ENCODE measurements at regions of chr6 and their contacts with region 1.

Region 1: GRCh38 chr6:158295976-158296471 is 16.2 kb upstream of the TULP4 start:
- DNase-seq: peak in 1 of 2 experiments; percentile 76
- H3K4me3 ChIP-seq: no peak overlapping the region
- H3K4me3 Mint-ChIP-seq: peak overlapping the region; percentile 50
- H3K27ac Mint-ChIP-seq: peak overlapping the region; percentile 88
- H3K4me1 ChIP-seq: peaks cover 30% of the 10 kb centered on the region
- H3K4me1 Mint-ChIP-seq: peaks cover 21% of the 10 kb centered on the region
- H3K27me3 ChIP-seq: no peaks in the 10 kb centered on the region
- H3K27me3 Mint-ChIP-seq: no peaks in the 10 kb centered on the region
- CTCF ChIP-seq: no peak

Region 2: GRCh38 chr6:158232316-158233213 is 63.5 kb before region 1 on chr6:
- CTCF ChIA-PET with region 1: no interaction called
- POLR2A ChIA-PET with region 1: no interaction called
- intact Hi-C with region 1: loop called (anchors 1 kb)
- DNase-seq: peak; percentile 58 to 66
- H3K4me3 ChIP-seq: peak overlapping the region; percentile 88
- H3K4me3 Mint-ChIP-seq: peak overlapping the region; percentile 94
- H3K27ac Mint-ChIP-seq: peak overlapping the region; percentile 94
- H3K4me1 ChIP-seq: peaks cover 7% of the 10 kb centered on the region; the same call in 1 of the 2 replicates
- H3K4me1 Mint-ChIP-seq: peaks cover 17% of the 10 kb centered on the region
- H3K27me3 ChIP-seq: no peaks in the 10 kb centered on the region
- H3K27me3 Mint-ChIP-seq: no peaks in the 10 kb centered on the region
- CTCF ChIP-seq: no peak

Region 3: DNA sequence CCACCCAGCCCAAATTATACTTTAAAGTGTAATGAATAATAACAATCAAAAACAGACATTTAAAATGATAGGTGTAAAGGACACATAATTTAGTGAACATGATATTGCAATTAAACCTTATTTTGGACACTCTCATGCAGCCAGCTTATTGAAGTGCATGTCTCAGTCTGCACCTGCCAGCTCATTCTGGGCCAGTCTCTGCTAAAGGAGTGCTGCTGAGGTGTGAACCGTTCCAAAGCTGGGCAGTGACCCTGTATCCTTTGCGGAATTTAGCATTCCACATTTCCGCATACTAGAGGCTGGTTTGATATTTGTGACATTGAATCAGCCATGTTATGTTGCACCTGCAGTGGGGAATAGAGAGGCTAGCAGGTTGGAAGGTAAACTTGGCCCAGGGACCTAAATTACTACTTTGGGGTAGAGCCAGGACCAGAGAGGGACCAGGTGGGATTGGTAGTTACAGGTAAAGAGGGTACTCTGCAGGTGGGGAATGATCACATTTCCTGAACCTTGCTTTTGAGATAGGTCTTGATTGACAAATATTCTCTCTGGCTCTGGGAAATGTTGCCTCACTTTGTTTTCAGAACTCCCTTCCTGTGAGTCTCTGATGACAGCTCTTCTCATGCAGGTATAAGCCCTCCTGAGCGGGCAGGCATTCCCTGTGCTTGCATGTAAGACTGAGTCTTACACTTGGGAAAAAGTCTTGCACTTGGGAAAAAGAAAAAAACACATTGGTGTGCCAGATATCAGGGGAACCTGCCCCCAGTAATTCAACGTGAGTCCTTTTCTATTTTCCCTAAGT is 42.5 kb after region 1 on chr6:
- CTCF ChIA-PET with region 1: no interaction called
- POLR2A ChIA-PET with region 1: no interaction called
- intact Hi-C with region 1: loop called (anchors 1 kb)
- DNase-seq: no peak
- H3K4me3 ChIP-seq: no peak overlapping the region
- H3K4me3 Mint-ChIP-seq: peak overlapping the region; percentile 2
- H3K27ac Mint-ChIP-seq: peak overlapping the region; percentile 72
- H3K4me1 ChIP-seq: peaks cover 27% of the 10 kb centered on the region
- H3K4me1 Mint-ChIP-seq: peaks cover 30% of the 10 kb centered on the region
- H3K27me3 ChIP-seq: no peaks in the 10 kb centered on the region
- H3K27me3 Mint-ChIP-seq: no peaks in the 10 kb centered on the region
- CTCF ChIP-seq: no peak

Region 4: DNA sequence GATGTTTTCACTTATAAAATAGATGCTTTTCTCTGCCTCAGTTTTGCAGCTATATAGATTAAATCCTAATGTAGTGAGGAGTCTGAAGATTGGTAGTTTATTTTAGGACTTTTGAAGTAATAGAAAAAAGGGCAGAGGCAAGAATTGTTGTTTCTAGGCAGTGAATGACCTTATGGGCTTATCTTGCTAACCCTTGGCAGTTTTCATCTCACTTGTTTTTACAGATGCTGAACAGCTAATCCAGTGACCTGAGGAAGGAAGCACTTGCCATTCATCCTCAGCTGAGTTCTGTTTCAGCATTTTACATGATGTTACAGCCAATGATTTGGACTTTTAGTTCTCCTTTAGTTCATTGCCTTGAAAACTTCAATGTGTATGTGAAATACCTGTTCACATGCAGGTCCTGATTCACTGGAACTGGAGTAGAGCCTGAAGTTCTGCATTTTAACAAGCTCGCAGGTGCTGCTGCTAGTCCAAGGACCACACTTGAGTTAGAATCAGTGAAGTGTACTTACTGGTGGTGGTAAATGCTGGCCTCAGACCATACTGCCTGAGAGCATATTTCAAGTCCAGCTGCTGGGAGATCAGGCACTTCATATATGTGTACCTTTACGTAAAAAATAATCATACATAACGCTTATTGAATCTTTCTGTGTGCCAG is 103.1 kb after region 1 on chr6:
- CTCF ChIA-PET with region 1: no interaction called
- POLR2A ChIA-PET with region 1: no interaction called
- intact Hi-C with region 1: loop called (anchors 5 kb)
- DNase-seq: no peak
- H3K4me3 ChIP-seq: no peak overlapping the region
- H3K4me3 Mint-ChIP-seq: no peak overlapping the region
- H3K27ac Mint-ChIP-seq: no peak overlapping the region
- H3K4me1 ChIP-seq: peaks cover 30% of the 10 kb centered on the region
- H3K4me1 Mint-ChIP-seq: peaks cover 16% of the 10 kb centered on the region
- H3K27me3 ChIP-seq: no peaks in the 10 kb centered on the region
- H3K27me3 Mint-ChIP-seq: no peaks in the 10 kb centered on the region
- CTCF ChIP-seq: no peak

Measured in Caco-2 (cell line).